ENCODE measurements at regions of chr2 and their contacts with region 1.

Region 1: GRCh38 chr2:30711646-30712085 is 95.6 kb downstream of the CAPN13 start:
- DNase-seq: peak; percentile 78
- H3K4me3 ChIP-seq: no peak overlapping the region
- H3K27ac ChIP-seq: no peak overlapping the region
- H3K27me3 ChIP-seq: peaks cover 5% of the 10 kb centered on the region
- CTCF ChIP-seq: peak; percentile 100

Region 2: GRCh38 chr2:30165050-30165520 is 546.6 kb before region 1 on chr2:
- CTCF ChIA-PET with region 1: interaction called, 623 read pairs
- POLR2A ChIA-PET with region 1: no interaction called
- DNase-seq: peak; percentile 83
- H3K4me3 ChIP-seq: no peak overlapping the region
- H3K27ac ChIP-seq: no peak overlapping the region
- H3K27me3 ChIP-seq: no peaks in the 10 kb centered on the region
- CTCF ChIP-seq: peak; percentile 93

Region 3: GRCh38 chr2:30208452-30208851 is 503.2 kb before region 1 on chr2:
- CTCF ChIA-PET with region 1: interaction called, 181 read pairs
- POLR2A ChIA-PET with region 1: interaction called, 3 read pairs
- DNase-seq: peak; percentile 73
- H3K4me3 ChIP-seq: no peak overlapping the region
- H3K27ac ChIP-seq: no peak overlapping the region
- H3K27me3 ChIP-seq: peaks cover 13% of the 10 kb centered on the region
- CTCF ChIP-seq: peak; percentile 96

Region 4: GRCh38 chr2:30267161-30267975 is 444.3 kb before region 1 on chr2:
- CTCF ChIA-PET with region 1: interaction called, 13 read pairs
- POLR2A ChIA-PET with region 1: no interaction called
- DNase-seq: no peak
- H3K4me3 ChIP-seq: no peak overlapping the region
- H3K27ac ChIP-seq: no peak overlapping the region
- H3K27me3 ChIP-seq: no peaks in the 10 kb centered on the region
- CTCF ChIP-seq: no peak

Region 5: DNA sequence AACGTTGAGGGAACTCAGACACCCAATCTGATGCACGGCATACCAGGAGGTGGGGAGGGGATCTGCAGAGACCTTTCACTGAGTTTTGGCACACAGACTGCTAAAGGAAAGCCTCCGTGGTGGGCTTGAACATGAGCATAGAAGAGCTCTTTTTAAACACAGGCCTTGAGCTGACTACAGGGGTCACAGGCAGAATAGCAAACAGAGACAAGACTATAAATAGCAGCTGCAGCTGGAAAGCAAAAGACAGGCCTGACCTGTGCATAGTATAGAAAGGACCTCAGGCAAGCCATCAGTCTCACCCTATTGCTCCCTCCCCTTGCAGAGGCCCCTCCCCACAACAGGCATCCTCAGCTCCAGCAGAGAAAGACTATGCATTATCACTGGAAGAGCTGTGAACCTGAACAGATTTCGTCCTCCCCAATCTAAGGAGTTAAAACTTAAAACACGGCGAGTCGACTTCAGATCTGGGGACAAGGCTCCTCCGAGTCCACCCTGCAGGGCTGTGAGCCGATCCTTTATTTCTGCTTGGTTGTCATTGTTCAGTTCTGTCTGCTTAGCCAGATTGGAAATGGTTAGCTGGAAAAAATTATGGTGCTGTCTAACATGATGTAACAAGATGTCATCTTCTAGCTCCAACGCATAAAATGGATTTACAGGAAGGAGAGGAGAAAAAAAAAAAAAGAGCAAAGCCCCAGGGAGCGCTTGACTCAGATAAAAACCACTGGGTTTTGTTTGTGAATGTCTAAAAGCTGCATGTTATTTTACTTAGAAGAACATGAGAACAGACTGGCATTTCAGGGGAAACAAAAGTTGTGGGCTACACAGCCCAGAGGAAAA is 289.8 kb before region 1 on chr2:
- CTCF ChIA-PET with region 1: interaction called, 22 read pairs
- POLR2A ChIA-PET with region 1: no interaction called
- DNase-seq: no peak
- H3K4me3 ChIP-seq: peak overlapping the region; percentile 23; the same call in 1 of the 2 replicates
- H3K27ac ChIP-seq: peak overlapping the region; percentile 92
- H3K27me3 ChIP-seq: no peaks in the 10 kb centered on the region
- CTCF ChIP-seq: no peak

Region 6: GRCh38 chr2:30666307-30666874 is 45.3 kb before region 1 on chr2:
- CTCF ChIA-PET with region 1: interaction called, 14 read pairs
- POLR2A ChIA-PET with region 1: no interaction called
- DNase-seq: peak; percentile 96
- H3K4me3 ChIP-seq: no peak overlapping the region
- H3K27ac ChIP-seq: peak overlapping the region; percentile 100
- H3K27me3 ChIP-seq: no peaks in the 10 kb centered on the region
- CTCF ChIP-seq: no peak

Region 7: GRCh38 chr2:31333527-31334183 is 622.0 kb after region 1 on chr2:
- CTCF ChIA-PET with region 1: interaction called, 80 read pairs
- POLR2A ChIA-PET with region 1: no interaction called
- DNase-seq: peak; percentile 68
- H3K4me3 ChIP-seq: no peak overlapping the region
- H3K27ac ChIP-seq: no peak overlapping the region
- H3K27me3 ChIP-seq: no peaks in the 10 kb centered on the region
- CTCF ChIP-seq: peak; percentile 98

Measured in AG04450 (cell line).